Dorsolateral prefrontal cortex (tissue), 120 donors: ENCODE measurements at regions of chr6 and their contacts with region 1.

Region 1: GRCh38 chr6:136792410-136793262 is at the start of gene MAP3K5:
- DNase-seq: peak; percentile 73 to 92 (median 88)
- H3K4me3 ChIP-seq: peak within 1 kb of the TSS; percentile 60 to 95 (median 83)
- H3K27ac ChIP-seq: peak within 1 kb of the TSS; percentile 41 to 98 (median 92)
- H3K27me3 ChIP-seq: no peaks in the 10 kb centered on the region
- CTCF ChIP-seq: peak; percentile 38 to 86 (median 73)
- total RNA-seq, gene MAP3K5: 26.2 to 70.0 (median 45.3) TPM

Region 2: DNA sequence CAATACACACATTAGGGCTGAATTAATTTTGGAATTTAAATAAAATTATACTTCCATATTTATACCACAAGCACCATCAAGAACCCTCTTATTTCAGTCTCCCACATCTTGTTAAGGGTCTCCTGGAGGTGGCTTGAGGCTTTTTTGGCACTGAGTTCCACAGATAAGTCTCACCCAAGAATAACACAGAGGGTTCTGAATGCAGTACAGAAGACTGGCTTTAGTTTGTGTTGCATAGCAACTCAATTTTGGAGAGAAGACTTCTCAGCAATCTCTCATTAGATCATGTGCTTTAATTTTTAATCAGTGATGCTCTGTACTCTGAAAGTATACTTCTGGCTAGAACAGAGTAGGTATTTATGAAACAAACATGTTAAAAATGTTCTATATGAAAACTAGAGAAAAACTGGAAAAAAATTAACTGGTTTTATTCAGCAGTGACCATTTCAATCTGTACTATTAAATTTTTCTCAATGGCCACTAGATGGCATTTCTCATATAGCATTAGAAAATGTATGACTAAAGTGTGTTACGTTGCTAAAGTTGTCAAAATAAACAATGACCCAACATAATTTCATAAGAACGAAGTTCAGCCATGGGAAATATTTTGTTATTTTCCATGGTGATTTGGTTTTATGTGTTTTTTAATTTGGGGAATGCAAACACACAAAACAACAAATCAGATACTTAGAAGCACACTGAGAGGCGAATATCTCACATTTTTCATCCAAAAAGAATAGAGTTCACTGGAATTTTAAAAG is 209.7 kb before region 1 on chr6:
- intact Hi-C with region 1: loop called in 1 of 2 experiments (anchors 5 kb)
- DNase-seq: no peak
- H3K4me3 ChIP-seq: no peak overlapping the region
- H3K27ac ChIP-seq: peak overlapping the region in 26 of 59 donors; percentile 1 to 68 (median 28)
- H3K27me3 ChIP-seq: no peaks in the 10 kb centered on the region
- CTCF ChIP-seq: peak; percentile 42 to 79 (median 67)

Region 3: DNA sequence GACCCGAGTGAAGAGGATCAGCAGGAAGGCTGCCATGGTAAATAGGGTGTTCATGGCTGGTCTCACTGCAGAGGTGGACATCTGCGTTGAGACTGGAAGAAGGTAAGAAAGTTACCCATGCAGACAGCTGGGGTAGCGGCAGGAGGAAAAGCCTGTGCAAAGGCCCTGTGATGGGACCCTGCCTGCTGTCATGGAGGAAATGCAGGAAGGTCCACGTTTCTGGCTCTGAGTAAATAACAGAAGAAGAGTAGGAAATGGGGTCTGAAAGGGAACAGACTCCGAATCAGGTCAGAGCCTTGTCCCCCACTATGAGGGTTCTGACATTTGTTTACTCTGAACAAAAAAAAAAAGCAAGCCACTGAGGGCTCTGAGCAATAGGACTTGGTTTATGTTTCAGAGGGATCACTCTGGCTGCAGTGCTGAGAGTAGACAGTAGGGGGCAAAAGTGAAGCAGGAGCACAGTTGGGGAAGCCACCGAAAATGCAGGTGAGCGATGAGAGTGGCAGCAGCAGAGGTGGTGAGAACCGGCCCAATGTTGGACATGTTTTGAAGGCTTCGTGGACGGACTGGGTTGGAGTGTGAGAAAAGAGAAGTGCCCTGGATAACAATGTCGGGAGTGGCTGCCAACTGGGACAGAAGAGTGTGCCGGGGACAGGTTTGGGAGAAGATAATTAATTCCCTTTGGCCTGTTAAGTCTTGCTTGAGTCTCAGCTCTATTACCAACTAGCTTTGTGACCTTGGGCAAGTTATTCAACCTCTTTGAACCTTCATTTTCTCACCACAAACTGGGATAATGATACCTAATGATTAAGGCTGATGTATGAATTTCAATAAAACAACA is 184.5 kb before region 1 on chr6:
- intact Hi-C with region 1: loop called in 1 of 2 experiments (anchors 10 kb)
- DNase-seq: peak in 9 of 10 donors; percentile 46 to 78 (median 67)
- H3K4me3 ChIP-seq: no peak overlapping the region
- H3K27ac ChIP-seq: no peak overlapping the region
- H3K27me3 ChIP-seq: no peaks in the 10 kb centered on the region
- CTCF ChIP-seq: peak; percentile 33 to 78 (median 68)

Region 4: DNA sequence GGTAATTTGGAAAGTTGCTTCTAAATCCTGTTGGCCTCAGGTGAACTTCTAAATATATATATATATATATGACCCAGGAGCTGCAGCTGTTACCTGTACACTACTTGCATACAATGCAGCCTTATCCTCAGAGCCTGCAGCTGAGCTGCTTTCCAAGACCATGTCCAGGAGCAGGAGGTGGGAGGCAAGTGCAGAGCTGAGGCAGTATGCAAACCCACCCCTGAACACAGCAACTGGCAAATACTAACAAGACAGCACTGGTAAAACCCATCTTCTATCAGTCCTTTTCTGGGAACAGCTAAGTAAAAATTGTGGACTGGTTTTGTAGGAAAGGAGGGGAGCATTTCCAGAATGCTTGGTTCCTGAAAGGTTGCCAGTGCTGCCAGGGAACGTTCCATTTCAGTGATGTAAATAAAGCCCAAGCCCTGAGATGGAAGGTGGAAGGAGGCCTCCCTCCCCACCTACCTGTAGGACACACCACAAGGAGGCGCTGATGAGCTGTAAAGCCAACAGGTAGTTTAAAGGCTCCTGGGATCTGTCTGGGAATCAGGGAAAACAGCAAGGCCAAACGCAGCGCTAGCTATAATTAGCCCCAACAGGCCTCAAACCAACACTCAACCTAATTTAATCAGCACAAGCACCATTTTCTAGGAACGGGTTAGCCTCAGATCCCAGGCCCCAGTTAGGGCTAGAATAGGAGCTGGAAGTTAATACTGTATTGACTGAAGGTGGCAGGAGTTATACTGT is 148.6 kb before region 1 on chr6:
- intact Hi-C with region 1: loop called (anchors 1 to 2 kb)
- DNase-seq: peak; percentile 33 to 94 (median 72)
- H3K4me3 ChIP-seq: no peak overlapping the region
- H3K27ac ChIP-seq: peak overlapping the region in 20 of 59 donors; percentile 2 to 61 (median 26)
- H3K27me3 ChIP-seq: no peaks in the 10 kb centered on the region
- CTCF ChIP-seq: peak; percentile 46 to 88 (median 77)

Region 5: DNA sequence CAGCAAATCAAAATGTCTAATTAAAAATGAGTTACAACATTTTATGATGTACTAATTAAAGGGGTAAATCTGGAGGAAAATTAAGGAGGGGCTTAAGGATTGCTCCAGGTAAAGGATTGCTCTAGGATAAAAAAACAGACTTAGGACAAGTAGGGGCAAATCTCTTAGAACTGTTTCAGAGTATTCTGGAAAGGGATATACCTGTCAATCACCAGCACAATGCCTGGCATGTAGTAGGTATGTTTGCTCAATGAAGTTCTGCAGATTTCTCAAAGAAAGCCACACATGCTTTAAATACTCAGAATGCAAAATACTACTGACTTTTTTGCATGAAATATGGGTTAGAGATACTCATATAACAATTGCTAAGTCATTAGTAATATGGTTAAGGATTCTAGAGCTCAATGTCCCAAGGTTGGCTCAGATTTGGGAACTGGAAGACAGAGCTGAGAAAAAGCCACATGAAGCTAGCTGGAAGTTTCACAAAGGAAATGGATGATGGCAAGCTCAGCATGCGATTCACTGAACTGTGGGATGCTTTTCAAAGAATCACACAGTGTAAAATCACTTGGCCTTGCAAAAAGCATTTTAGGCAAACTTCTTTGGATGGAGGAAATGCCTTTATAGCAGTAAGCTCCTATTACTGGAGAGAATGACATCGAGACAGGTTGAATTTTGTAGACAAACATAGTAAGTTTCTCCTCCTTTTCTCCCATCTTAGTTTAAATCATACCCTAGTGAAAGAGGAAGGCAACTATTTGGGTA is 73.2 kb before region 1 on chr6:
- intact Hi-C with region 1: loop called (anchors 5 kb)
- DNase-seq: no peak
- H3K4me3 ChIP-seq: no peak overlapping the region
- H3K27ac ChIP-seq: peak overlapping the region in 46 of 59 donors; percentile 7 to 81 (median 52)
- H3K27me3 ChIP-seq: no peaks in the 10 kb centered on the region
- CTCF ChIP-seq: no peak

Region 6: GRCh38 chr6:136822376-136823127 is 29.9 kb after region 1 on chr6 and contains the start of gene PEX7:
- intact Hi-C with region 1: loop called in 1 of 2 experiments (anchors 2 kb)
- DNase-seq: peak; percentile 89 to 95 (median 93)
- H3K4me3 ChIP-seq: peak within 1 kb of the TSS; percentile 54 to 91 (median 77)
- H3K27ac ChIP-seq: peak within 1 kb of the TSS in 58 of 59 donors; percentile 58 to 96 (median 89)
- H3K27me3 ChIP-seq: no peaks in the 10 kb centered on the region
- CTCF ChIP-seq: peak in 55 of 56 donors; percentile 28 to 84 (median 64)
- total RNA-seq, gene PEX7: 2.1 to 11.5 (median 7.1) TPM

Region 7: GRCh38 chr6:136901212-136901784 is 108.7 kb after region 1 on chr6:
- intact Hi-C with region 1: no loop called
- DNase-seq: no peak
- H3K4me3 ChIP-seq: no peak overlapping the region
- H3K27ac ChIP-seq: no peak overlapping the region
- H3K27me3 ChIP-seq: no peaks in the 10 kb centered on the region
- CTCF ChIP-seq: no peak